Colonic mucosa (tissue), 4 donors: ENCODE measurements at regions of chr1 and their contacts with region 1.

Region 1: DNA sequence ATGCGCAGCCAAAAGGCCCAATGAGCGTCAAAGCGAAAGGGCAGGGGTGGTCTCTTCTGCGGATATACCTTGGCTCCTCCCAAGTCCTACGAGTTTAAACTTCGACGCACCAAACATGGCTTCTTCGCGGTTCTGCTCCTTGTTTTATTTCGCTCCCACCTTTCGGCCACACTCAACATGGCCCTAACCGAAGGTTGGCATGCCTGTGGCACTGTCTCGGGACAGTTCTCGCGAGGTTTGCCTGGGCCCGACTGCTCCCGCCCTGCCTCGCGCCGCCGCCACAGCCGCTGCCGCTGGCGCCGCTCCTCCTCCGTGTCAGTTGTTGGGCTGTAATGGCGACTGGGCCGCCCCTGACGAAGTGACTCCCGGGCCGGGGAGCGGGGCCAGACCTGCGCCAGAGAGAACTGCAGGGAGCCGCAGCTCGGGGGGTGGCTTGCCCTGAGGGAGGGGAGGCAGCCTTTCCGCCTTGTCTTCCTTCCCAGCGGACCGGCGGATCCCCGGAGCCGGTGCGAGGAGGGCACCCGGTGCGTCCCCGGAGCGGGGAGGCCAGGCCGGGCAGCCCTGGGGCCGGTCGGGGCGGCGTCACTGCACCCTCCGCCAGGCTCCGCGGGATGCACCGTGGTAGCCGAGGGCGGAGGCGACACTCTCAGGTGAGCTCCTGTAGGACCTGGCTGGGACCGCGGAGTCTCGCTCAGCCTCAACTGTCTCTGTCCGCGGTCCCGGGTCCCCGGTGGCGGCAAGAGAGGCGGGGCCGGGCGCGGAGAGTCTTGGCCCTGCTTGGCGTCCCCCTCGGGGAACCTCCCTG is at the start of gene CEP350:
- DNase-seq: peak; percentile 98
- H3K4me3 ChIP-seq: peak within 1 kb of the TSS; percentile 67
- H3K27ac ChIP-seq: peak within 1 kb of the TSS; percentile 92
- H3K4me1 ChIP-seq: no peaks in the 10 kb centered on the region
- H3K27me3 ChIP-seq: no peaks in the 10 kb centered on the region
- CTCF ChIP-seq: no peak
- total RNA-seq, gene CEP350: 34.7 to 50.6 TPM

Region 2: DNA sequence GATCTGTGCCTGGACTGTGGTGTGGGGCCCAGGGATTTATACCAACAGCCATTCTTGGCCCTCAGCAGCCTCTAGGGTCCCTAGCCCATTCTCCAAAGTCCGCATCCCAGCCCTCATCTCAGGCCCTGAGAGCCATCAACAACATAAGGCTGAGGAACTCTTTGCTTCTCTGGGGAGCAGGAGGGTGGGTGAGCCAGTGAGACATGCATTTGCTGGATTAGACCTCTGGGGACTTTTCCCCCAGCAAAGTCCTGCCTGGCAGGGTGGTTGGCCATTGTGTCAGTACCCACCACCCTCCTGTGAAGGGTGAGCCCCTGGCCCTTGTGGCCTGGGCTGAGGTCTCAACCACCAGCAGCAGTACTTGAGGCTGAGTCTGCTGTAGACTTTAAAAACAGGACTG is 953.2 kb before region 1 on chr1:
- intact Hi-C with region 1: no loop called
- DNase-seq: no peak
- H3K4me3 ChIP-seq: no peak overlapping the region
- H3K27ac ChIP-seq: no peak overlapping the region
- H3K4me1 ChIP-seq: no peaks in the 10 kb centered on the region
- H3K27me3 ChIP-seq: no peaks in the 10 kb centered on the region
- CTCF ChIP-seq: no peak

Region 3: DNA sequence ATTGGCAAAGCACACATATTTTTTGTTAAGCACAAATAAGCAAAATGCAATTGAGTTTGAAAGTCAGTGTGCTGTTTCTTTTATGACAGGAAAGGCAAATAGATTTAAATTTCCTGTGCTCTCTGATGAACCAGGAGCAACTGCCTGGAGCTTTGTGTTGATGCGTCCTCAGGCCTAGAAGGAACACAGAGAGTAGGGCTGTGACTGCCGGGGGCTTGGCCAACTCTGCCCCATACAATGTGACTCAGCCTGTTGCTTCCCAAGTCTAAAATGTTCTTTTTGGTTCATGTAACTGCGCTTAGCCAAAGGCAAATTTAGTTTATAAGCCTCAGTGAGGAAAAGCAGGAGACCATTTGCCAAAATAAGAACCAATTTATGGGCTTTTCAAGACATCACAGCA is 114.6 kb before region 1 on chr1:
- intact Hi-C with region 1: no loop called
- DNase-seq: no peak
- H3K4me3 ChIP-seq: no peak overlapping the region
- H3K27ac ChIP-seq: no peak overlapping the region
- H3K4me1 ChIP-seq: no peaks in the 10 kb centered on the region
- H3K27me3 ChIP-seq: no peaks in the 10 kb centered on the region
- CTCF ChIP-seq: no peak

Region 4: GRCh38 chr1:179882243-179883039 is 72.3 kb before region 1 on chr1 and contains the start of gene TOR1AIP1:
- intact Hi-C with region 1: loop called (anchors 10 kb)
- DNase-seq: peak; percentile 96
- H3K4me3 ChIP-seq: peak within 1 kb of the TSS; percentile 82
- H3K27ac ChIP-seq: peak within 1 kb of the TSS; percentile 99
- H3K4me1 ChIP-seq: no peaks in the 10 kb centered on the region
- H3K27me3 ChIP-seq: no peaks in the 10 kb centered on the region
- CTCF ChIP-seq: peak; percentile 47
- total RNA-seq, gene TOR1AIP1: 19.3 to 29.7 TPM